ENCODE measurements at regions of chr16 and their contacts with region 1.

Region 1: DNA sequence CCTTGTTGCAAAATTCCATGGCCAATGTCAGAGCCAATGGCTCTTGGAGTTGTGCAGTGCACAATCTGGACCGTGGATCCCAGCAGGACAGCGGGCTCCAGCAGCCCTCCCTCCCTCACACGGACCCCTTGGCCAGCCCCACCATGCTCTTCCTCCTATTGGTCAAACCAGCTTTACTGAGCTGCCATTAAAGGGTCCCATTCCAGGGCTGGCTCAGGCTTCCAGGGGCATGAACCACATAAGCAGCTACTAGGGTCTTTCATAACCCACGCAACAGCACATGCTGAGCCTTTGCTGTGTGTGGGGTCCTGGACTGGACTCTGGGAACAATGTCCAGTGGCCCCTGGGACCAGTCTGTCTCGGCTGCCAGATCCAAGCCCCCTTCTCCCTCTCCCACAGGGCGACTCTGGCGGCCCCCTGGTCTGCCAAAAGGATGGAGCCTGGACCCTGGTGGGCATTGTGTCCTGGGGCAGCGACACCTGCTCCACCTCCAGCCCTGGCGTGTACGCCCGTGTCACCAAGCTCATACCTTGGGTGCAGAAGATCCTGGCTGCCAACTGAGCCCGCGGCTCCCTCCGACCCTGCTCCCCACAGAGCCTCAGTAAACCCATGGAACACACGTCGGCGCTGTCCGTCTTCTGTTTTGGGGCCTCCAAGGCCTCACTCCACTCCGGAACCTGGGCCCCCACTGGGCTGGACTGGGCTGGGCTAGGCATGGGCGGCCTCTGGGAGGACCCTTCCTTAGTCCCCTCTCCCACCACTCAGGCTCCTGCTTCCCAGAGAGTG is 5.7 kb downstream of the CTRB1 start:
- DNase-seq: no peak
- H3K4me3 ChIP-seq: no peak overlapping the region
- H3K27ac ChIP-seq: no peak overlapping the region
- H3K4me1 ChIP-seq: no peaks in the 10 kb centered on the region
- H3K27me3 ChIP-seq: peaks cover 0 to 12% (median 9%) of the 10 kb centered on the region in 3 donors
- CTCF ChIP-seq: no peak
- EP300 ChIP-seq: no peak
- POLR2A ChIP-seq: no peak

Region 2: DNA sequence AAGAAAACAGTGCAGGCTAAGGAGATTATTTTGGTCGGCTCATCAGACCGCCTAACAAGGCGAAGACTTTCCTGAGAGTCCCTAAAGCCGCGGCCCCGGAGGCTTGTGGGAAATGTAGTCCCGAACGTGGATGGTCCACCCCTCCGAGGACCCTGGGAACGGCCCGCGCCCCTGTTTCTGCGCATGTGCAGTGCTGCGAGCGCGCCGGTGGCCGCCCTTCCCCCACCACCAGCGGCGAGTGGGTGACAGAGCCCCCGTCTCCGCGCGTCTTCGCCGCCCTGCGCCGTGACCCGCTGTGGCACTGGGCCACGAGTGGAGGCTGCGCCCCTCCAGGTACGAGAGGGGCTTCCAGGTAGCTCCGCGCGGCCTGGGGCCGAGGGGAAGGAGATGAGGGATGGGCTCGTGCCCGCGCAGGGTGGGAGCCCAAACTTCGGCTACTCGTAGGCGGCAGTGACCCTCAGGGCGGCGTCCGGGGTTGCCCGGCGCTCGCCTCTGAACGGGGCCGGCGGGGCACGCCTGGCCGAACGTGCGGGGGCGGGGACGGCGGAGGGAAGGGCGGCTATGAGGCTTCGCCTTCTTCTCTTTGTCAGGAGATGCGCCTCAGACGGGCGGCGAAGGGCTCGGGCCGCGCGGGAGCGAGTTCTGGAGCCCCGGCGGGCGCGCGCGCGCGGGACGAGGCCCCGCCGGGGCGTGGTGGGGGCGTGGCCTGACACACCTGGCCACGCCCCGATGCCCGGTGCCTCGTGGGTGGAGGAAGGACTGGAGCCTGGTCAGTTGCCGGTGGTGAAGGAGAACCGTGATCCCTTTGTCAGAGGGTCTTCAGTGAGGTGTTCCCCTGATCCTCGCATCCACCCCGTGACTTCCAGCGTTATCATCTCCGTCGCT is 75.9 kb before region 1 on chr16 and contains the start of gene ZFP1:
- intact Hi-C with region 1: no loop called
- DNase-seq: peak; percentile 98
- H3K4me3 ChIP-seq: peak within 1 kb of the TSS; percentile 90 to 100 (median 99)
- H3K27ac ChIP-seq: peak within 1 kb of the TSS; percentile 98 to 100 (median 100)
- H3K4me1 ChIP-seq: peaks cover 0 to 11% (median 8%) of the 10 kb centered on the region in 4 donors
- H3K27me3 ChIP-seq: no peaks in the 10 kb centered on the region
- CTCF ChIP-seq: no peak
- EP300 ChIP-seq: peak in 1 of 4 donors; percentile 68
- POLR2A ChIP-seq: peak; percentile 40 to 53
- total RNA-seq, gene ZFP1: 9.2 to 17.5 (median 15.4) TPM

Region 3: GRCh38 chr16:75206749-75207451 is 17.6 kb before region 1 on chr16 and contains the start of gene CTRB2:
- intact Hi-C with region 1: loop called (anchors 2 kb)
- DNase-seq: no peak
- H3K4me3 ChIP-seq: no peak within 1 kb of the TSS
- H3K27ac ChIP-seq: no peak within 1 kb of the TSS
- H3K4me1 ChIP-seq: no peaks in the 10 kb centered on the region
- H3K27me3 ChIP-seq: no peaks in the 10 kb centered on the region
- CTCF ChIP-seq: no peak
- EP300 ChIP-seq: no peak
- POLR2A ChIP-seq: no peak
- total RNA-seq, gene CTRB2: not detected